ENCODE measurements at regions of chr3 and their contacts with region 1.

Region 1: DNA sequence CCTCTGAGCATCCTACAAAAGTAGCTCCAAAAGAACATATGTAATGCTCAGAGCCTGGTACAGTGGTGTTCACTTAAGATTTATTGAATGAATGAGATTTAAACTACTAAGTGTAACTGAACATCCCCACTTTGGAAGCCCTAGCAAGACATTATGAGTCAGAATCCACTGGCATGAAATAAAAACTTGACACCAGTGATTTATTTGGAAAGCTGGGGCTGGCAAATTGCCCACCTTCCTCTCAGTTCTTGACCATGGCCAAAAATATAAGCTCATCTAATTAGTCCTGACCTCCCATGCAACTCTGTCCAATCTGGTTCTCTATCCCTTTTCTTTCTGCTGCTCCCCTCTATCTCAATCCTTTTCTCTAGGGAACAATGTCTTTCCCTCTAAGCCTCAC is 418.0 kb downstream of the PLCL2 start:
- DNase-seq: no peak
- ATAC-seq: no peak
- H3K4me3 ChIP-seq: no peak overlapping the region
- H3K4me3 Mint-ChIP-seq: no peak overlapping the region
- H3K27ac ChIP-seq: no peak overlapping the region
- H3K27ac Mint-ChIP-seq: no peak overlapping the region
- H3K4me1 ChIP-seq: peaks cover 6% of the 10 kb centered on the region in 2 experiments
- H3K4me1 Mint-ChIP-seq: peaks cover 7 to 15% (median 12%) of the 10 kb centered on the region in 3 donors
- H3K27me3 ChIP-seq: no peaks in the 10 kb centered on the region
- H3K27me3 Mint-ChIP-seq: no peaks in the 10 kb centered on the region

Region 2: GRCh38 chr3:17278006-17278405 is 24.8 kb before region 1 on chr3:
- CTCF ChIA-PET with region 1: no interaction called
- POLR2A ChIA-PET with region 1: no interaction called
- DNase-seq: no peak
- ATAC-seq: no peak
- H3K4me3 ChIP-seq: no peak overlapping the region
- H3K4me3 Mint-ChIP-seq: no peak overlapping the region
- H3K27ac ChIP-seq: no peak overlapping the region
- H3K27ac Mint-ChIP-seq: no peak overlapping the region
- H3K4me1 ChIP-seq: no peaks in the 10 kb centered on the region
- H3K4me1 Mint-ChIP-seq: no peaks in the 10 kb centered on the region
- H3K27me3 ChIP-seq: no peaks in the 10 kb centered on the region
- H3K27me3 Mint-ChIP-seq: no peaks in the 10 kb centered on the region

Region 3: DNA sequence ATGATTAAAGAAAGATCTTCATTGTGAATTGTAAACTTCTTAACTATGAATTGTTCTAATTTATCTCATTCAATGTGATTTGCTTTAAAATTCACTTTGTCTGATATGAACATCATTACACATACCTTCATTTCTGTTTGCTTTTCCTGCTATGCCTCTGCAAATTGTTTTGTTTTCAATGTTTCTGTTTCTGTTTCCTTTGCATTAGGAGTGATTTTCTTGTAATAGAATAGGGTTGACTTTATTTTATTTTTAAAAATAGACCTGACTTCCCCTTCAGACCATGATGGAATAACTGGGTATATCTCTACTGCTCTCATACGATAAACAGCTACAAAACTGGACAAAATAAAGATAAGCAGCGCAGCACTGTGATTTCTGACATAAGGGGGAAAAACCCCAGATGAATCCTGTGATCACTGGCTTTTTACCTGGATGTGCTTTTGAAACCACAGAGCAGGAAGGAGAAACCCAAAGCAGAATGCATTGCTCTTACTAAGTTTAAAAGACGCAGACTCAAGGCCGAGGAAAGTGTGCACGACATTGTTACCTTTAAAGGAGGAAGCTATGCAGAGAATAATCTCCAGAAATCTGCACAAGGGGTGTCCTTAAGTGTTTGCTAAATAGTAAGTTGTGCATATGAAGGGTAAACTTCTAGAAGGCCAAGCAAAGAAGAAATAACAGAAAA is 19.5 kb after region 1 on chr3:
- CTCF ChIA-PET with region 1: no interaction called
- POLR2A ChIA-PET with region 1: no interaction called
- DNase-seq: peak in 7 of 35 experiments; percentile 4 to 46 (median 11)
- ATAC-seq: peak in 3 of 4 experiments; percentile 84 to 95 (median 86)
- H3K4me3 ChIP-seq: no peak overlapping the region
- H3K4me3 Mint-ChIP-seq: peak overlapping the region; percentile 29 to 37 (median 30)
- H3K27ac ChIP-seq: no peak overlapping the region
- H3K27ac Mint-ChIP-seq: peak overlapping the region; percentile 73 to 85
- H3K4me1 ChIP-seq: peaks cover 0 to 10% of the 10 kb centered on the region in 2 experiments
- H3K4me1 Mint-ChIP-seq: peaks cover 23 to 28% (median 25%) of the 10 kb centered on the region in 3 donors
- H3K27me3 ChIP-seq: no peaks in the 10 kb centered on the region
- H3K27me3 Mint-ChIP-seq: no peaks in the 10 kb centered on the region

Region 4: GRCh38 chr3:17459470-17459993 is 156.8 kb after region 1 on chr3:
- CTCF ChIA-PET with region 1: no interaction called
- POLR2A ChIA-PET with region 1: interaction called in 1 of 2 experiments, 17 read pairs
- DNase-seq: no peak
- ATAC-seq: no peak
- H3K4me3 ChIP-seq: no peak overlapping the region
- H3K4me3 Mint-ChIP-seq: no peak overlapping the region
- H3K27ac ChIP-seq: no peak overlapping the region
- H3K27ac Mint-ChIP-seq: no peak overlapping the region
- H3K4me1 ChIP-seq: no peaks in the 10 kb centered on the region
- H3K4me1 Mint-ChIP-seq: no peaks in the 10 kb centered on the region
- H3K27me3 ChIP-seq: no peaks in the 10 kb centered on the region
- H3K27me3 Mint-ChIP-seq: no peaks in the 10 kb centered on the region

Region 5: GRCh38 chr3:17473761-17474160 is 171.0 kb after region 1 on chr3:
- CTCF ChIA-PET with region 1: interaction called in 1 of 2 experiments, 10 read pairs
- POLR2A ChIA-PET with region 1: no interaction called
- DNase-seq: no peak
- ATAC-seq: no peak
- H3K4me3 ChIP-seq: no peak overlapping the region
- H3K4me3 Mint-ChIP-seq: no peak overlapping the region
- H3K27ac ChIP-seq: no peak overlapping the region
- H3K27ac Mint-ChIP-seq: no peak overlapping the region
- H3K4me1 ChIP-seq: no peaks in the 10 kb centered on the region
- H3K4me1 Mint-ChIP-seq: no peaks in the 10 kb centered on the region
- H3K27me3 ChIP-seq: no peaks in the 10 kb centered on the region
- H3K27me3 Mint-ChIP-seq: no peaks in the 10 kb centered on the region

Measured in T-cell (primary cell).